Aorta (tissue), 5 donors: ENCODE measurements at regions of chr22 and their contacts with region 1.

Region 1: DNA sequence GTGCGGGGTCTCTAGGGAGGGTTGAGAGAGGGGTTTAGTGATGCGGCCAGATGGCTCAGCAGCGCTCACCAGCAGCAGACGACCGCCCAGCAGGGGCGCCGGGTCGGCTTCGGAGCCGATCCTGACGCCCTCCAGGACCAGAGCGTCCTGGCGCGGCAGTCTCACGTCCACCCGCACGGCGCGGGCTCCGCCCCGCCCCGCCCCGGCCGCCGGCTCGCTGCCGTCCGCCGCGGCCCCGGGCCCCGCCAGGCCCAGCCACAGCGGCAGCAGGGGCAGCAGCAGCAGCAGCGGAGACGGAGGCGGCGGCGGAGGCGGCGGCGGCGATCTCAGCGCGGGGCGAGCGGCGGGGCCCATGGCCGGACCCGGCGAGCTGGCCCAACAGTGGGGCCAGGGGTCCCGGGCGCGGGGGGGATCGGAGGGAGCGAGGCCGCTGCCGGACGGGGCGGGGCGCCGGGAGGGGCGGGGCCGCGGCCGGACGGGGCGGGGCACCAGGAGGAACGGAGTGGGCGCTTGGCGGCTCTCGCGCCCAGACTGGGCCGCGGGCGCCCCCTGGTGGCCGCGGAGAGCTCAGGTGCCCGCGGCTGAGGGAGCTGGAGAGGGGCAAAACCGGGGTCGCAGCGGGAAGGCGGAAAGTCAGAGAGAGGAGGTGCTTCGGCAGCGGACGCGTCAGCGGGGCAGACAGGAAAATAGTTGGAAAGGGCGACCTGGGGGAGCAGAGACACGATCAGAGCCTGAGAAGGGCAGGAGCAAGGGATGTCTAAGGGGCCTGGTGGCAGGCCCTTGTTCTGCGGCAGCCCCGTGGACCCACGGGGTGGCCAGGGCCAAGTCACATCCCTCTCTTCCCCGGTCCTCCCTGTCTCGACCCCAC is at the start of gene RNF215:
- DNase-seq: peak; percentile 86 to 94
- ATAC-seq: peak; percentile 95
- H3K4me3 ChIP-seq: peak within 1 kb of the TSS; percentile 56 to 88
- H3K27ac ChIP-seq: no peak within 1 kb of the TSS
- H3K4me1 ChIP-seq: no peaks in the 10 kb centered on the region
- H3K27me3 ChIP-seq: no peaks in the 10 kb centered on the region
- total RNA-seq, gene RNF215: 15.6 to 20.9 TPM

Region 2: DNA sequence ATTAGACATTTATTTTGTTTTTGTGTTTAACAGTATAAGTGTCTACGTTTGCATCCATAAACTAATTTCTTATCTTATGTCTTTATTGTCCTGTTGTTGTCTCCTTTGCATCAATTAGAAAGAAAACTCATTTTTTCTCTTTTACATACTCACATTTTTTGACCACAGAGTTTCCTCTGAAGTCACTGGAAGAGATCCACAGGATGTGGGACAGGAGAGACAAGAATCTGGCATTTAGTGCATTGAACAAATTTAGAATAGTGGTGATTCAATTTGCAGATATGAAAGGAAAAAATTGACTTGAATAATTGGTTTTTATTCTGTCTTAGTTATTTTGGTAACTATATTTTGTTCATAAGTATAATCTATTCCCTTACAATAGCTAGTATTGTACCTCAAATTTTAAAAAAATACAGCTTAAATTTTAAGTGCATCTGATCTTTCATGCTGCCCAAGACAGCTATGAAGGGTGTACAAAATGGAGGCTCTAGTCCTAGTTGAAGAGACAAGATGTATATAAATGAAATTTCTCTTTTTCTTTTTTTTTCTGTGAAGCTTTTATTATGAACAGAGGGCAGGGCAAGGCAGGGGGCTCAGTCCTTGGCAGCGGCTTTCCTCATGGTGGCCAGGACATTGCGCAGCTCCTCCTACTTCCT is 282.6 kb before region 1 on chr22:
- intact Hi-C with region 1: loop called (anchors 2 kb)
- DNase-seq: no peak
- ATAC-seq: no peak
- H3K4me3 ChIP-seq: no peak overlapping the region
- H3K27ac ChIP-seq: no peak overlapping the region
- H3K4me1 ChIP-seq: no peaks in the 10 kb centered on the region
- H3K27me3 ChIP-seq: no peaks in the 10 kb centered on the region

Region 3: GRCh38 chr22:30262917-30263741 is 124.1 kb before region 1 on chr22:
- intact Hi-C with region 1: loop called (anchors 2 kb)
- DNase-seq: peak; percentile 84 to 94
- ATAC-seq: peak; percentile 67
- H3K4me3 ChIP-seq: no peak overlapping the region
- H3K27ac ChIP-seq: no peak overlapping the region
- H3K4me1 ChIP-seq: no peaks in the 10 kb centered on the region
- H3K27me3 ChIP-seq: no peaks in the 10 kb centered on the region

Region 4: DNA sequence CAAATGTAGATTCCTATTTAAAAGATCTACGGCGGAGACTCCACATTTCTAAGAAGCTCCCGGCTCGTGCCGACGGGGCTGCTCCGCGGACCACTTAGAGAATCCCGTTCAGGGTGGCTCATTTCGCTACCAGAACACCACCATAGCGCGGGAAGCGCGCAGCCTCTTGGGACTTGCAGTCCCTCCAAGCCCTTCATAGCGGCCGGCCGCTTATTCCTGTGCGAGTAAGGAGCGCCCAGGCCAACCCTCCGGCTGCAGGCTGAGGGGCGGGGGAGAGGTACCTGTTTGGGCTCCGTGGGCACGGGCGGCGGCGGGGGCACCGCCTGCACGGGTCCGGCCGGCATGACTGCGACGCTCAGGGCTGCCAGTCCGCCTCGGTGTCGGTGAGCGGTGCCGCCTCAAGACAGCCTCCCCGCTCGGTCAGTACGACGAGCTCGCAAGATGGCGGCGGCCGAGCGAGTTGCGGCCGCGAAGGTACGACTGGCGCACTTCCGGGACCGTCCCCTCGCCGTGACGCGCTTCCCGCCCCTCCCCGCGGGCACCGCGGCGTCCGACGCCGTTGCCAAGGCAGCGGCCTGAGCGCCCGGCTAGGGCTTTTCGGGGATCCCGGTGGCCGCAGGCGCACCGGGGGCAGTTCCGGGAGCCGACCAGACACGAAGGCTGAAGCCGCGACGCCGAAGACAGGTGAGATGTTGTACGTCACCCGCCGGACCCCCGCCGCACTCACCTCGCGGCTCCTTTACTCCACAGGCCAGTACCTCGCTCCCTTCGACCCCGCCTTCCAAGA is 30.6 kb before region 1 on chr22 and contains the starts of genes CCDC157 and SF3A1:
- intact Hi-C with region 1: loop called in 1 of 2 experiments (anchors 2 kb)
- DNase-seq: peak; percentile 94 to 97
- ATAC-seq: peak; percentile 98
- H3K4me3 ChIP-seq: peak within 1 kb of the TSS; percentile 53 to 71
- H3K27ac ChIP-seq: peak within 1 kb of the TSS in 1 of 2 donors; percentile 90
- H3K4me1 ChIP-seq: no peaks in the 10 kb centered on the region
- H3K27me3 ChIP-seq: no peaks in the 10 kb centered on the region
- total RNA-seq, gene CCDC157: 0.87 to 2.4 TPM
- total RNA-seq, gene SF3A1: 112 to 116 TPM

Region 5: GRCh38 chr22:30485362-30485988 is 98.3 kb after region 1 on chr22:
- intact Hi-C with region 1: loop called in 1 of 2 experiments (anchors 2 kb)
- DNase-seq: peak; percentile 68 to 85
- ATAC-seq: peak; percentile 76
- H3K4me3 ChIP-seq: no peak overlapping the region
- H3K27ac ChIP-seq: no peak overlapping the region
- H3K4me1 ChIP-seq: no peaks in the 10 kb centered on the region
- H3K27me3 ChIP-seq: no peaks in the 10 kb centered on the region